Psoas muscle (tissue), 8 donors: ENCODE measurements at regions of chr4 and their contacts with region 1.

Region 1: GRCh38 chr4:54440394-54441136 is 211.5 kb downstream of the PDGFRA start:
- DNase-seq: no peak
- ATAC-seq: peak in 3 of 4 donors; percentile 62 to 88 (median 73)
- H3K4me3 ChIP-seq: peak overlapping the region; percentile 56
- H3K27ac ChIP-seq: no peak overlapping the region
- H3K4me1 ChIP-seq: peaks cover 7% of the 10 kb centered on the region
- H3K27me3 ChIP-seq: no peaks in the 10 kb centered on the region
- CTCF ChIP-seq: peak; percentile 71

Region 2: DNA sequence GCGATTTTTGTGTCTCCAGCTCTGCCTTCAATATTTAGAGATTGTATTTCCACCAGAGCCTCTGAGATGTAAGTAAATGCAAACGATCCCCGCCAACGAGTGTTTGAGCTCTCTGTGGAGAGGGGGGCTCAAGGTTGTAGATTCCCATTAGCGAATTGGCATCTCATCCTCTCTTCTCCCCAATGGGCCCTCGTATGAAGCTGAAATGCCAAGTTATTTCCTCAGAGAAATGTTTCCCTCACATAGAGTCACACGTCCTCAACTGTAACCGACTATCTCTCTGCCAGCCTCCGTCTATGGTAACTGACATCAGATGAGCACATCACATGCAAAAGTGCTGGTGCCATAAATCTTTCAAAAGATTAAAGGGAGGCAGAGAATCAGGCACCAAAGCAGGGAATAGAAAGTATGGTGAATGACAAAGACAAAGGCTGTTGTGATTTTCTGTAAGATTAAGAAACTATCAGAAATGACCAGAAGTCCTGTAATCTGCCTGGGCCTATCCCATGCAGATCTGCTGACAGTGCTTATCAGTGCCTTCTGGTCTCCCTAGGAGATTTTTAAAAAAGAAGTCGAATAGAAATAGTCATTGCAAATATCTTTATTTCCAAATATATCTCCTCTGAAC is 54.4 kb before region 1 on chr4:
- intact Hi-C with region 1: loop called in 1 of 2 experiments (anchors 5 kb)
- DNase-seq: no peak
- ATAC-seq: no peak
- H3K4me3 ChIP-seq: no peak overlapping the region
- H3K27ac ChIP-seq: no peak overlapping the region
- H3K4me1 ChIP-seq: no peaks in the 10 kb centered on the region
- H3K27me3 ChIP-seq: no peaks in the 10 kb centered on the region
- CTCF ChIP-seq: no peak